ENCODE measurements at regions of chr17 and their contacts with region 1.

Region 1: GRCh38 chr17:74296548-74296936 is 22.5 kb downstream of the DNAI2 start:
- DNase-seq: no peak
- ATAC-seq: peak; percentile 83
- H3K4me3 ChIP-seq: no peak overlapping the region
- H3K27ac ChIP-seq: no peak overlapping the region
- H3K4me1 ChIP-seq: no peaks in the 10 kb centered on the region
- H3K27me3 ChIP-seq: no peaks in the 10 kb centered on the region
- CTCF ChIP-seq: peak; percentile 43 to 72 (median 56); a peak in 4 of 6 replicates
- EP300 ChIP-seq: no peak
- POLR2A ChIP-seq: no peak
- RAD21 ChIP-seq: peak; percentile 47

Region 2: GRCh38 chr17:72407336-72407909 is 1889.1 kb before region 1 on chr17:
- CTCF ChIA-PET with region 1: no interaction called
- POLR2A ChIA-PET with region 1: no interaction called
- RAD21 ChIA-PET with region 1: no interaction called
- SMC1A ChIA-PET with region 1: no interaction called
- in situ Hi-C with region 1: loop called (anchors 25 kb)
- intact Hi-C with region 1: no loop called
- DNase-seq: no peak
- ATAC-seq: peak; percentile 91
- H3K4me3 ChIP-seq: no peak overlapping the region
- H3K27ac ChIP-seq: peak overlapping the region; percentile 13; the same call in 1 of the 2 replicates
- H3K4me1 ChIP-seq: peaks cover 13% of the 10 kb centered on the region
- H3K27me3 ChIP-seq: no peaks in the 10 kb centered on the region
- CTCF ChIP-seq: no peak
- EP300 ChIP-seq: peak; percentile 58 to 76; a peak in 3 of 4 replicates
- POLR2A ChIP-seq: no peak
- RAD21 ChIP-seq: no peak

Region 3: DNA sequence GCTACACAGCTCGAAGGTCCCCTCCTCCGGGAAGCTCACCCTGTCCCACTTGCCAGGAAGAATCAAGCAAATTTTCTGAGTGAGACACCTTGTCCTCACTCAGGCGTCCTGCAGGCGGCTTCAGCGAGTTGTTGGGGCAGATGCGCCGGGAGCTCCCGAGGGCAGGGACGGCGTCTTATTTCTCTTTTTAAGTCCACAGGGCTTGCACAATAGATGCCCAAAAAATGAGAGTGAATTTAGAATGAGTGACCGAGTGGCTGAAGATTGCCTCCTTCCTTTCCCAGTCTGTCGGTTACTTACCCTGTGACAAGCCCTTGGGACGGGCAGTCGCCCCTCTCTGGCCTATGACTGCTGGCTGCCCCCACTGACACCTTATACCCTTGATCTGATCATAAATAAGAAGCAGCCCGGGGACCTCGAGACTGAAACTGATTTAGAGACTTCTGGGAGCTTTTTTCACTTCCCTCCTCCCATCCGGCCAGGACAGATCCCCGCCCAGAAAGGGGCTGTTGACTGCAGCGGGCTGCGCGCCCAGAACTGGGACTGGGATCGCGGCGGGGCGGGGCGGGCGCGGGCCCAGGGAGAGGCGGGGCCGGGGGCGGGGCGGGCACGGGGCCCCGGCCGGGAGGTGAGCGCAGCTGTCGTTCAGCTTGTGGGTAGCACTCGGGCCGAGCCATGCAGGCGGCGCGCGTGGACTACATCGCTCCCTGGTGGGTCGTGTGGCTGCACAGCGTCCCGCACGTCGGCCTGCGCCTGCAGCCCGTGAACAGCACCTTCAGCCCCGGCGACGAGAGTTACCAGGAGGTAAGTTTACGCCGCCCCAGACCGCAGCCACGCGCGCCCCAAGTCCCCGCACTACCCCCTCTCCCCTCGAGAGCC is 83.4 kb before region 1 on chr17 and contains the start of gene TTYH2:
- CTCF ChIA-PET with region 1: interaction called, 25 read pairs
- POLR2A ChIA-PET with region 1: interaction called, 7 read pairs
- RAD21 ChIA-PET with region 1: interaction called, 10 read pairs
- SMC1A ChIA-PET with region 1: interaction called, 9 read pairs
- in situ Hi-C with region 1: no loop called
- intact Hi-C with region 1: loop called (anchors 1 kb)
- DNase-seq: no peak
- ATAC-seq: peak; percentile 76
- H3K4me3 ChIP-seq: peak within 1 kb of the TSS; percentile 77
- H3K27ac ChIP-seq: peak within 1 kb of the TSS; percentile 47
- H3K4me1 ChIP-seq: peaks cover 28% of the 10 kb centered on the region
- H3K27me3 ChIP-seq: no peaks in the 10 kb centered on the region
- CTCF ChIP-seq: peak; percentile 18 to 37 (median 25); a peak in 4 of 6 replicates
- EP300 ChIP-seq: no peak
- POLR2A ChIP-seq: peak; percentile 86
- RAD21 ChIP-seq: peak; percentile 29; the same call in 1 of the 2 replicates
- polyA plus RNA-seq, gene TTYH2: 0.26 to 0.47 TPM

Region 4: GRCh38 chr17:74280093-74280513 is 16.4 kb before region 1 on chr17:
- CTCF ChIA-PET with region 1: interaction called, 160 read pairs
- POLR2A ChIA-PET with region 1: interaction called, 7 read pairs
- RAD21 ChIA-PET with region 1: interaction called, 102 read pairs
- SMC1A ChIA-PET with region 1: interaction called, 101 read pairs
- in situ Hi-C with region 1: no loop called
- intact Hi-C with region 1: no loop called
- DNase-seq: no peak
- ATAC-seq: peak; percentile 76
- H3K4me3 ChIP-seq: 0 out of 2 replicates have a peak overlapping the region, but pooled peaks have one; percentile 24
- H3K27ac ChIP-seq: peak overlapping the region; percentile 79
- H3K4me1 ChIP-seq: peaks cover 27% of the 10 kb centered on the region
- H3K27me3 ChIP-seq: no peaks in the 10 kb centered on the region
- CTCF ChIP-seq: no peak
- EP300 ChIP-seq: no peak
- POLR2A ChIP-seq: no peak
- RAD21 ChIP-seq: no peak

Region 5: DNA sequence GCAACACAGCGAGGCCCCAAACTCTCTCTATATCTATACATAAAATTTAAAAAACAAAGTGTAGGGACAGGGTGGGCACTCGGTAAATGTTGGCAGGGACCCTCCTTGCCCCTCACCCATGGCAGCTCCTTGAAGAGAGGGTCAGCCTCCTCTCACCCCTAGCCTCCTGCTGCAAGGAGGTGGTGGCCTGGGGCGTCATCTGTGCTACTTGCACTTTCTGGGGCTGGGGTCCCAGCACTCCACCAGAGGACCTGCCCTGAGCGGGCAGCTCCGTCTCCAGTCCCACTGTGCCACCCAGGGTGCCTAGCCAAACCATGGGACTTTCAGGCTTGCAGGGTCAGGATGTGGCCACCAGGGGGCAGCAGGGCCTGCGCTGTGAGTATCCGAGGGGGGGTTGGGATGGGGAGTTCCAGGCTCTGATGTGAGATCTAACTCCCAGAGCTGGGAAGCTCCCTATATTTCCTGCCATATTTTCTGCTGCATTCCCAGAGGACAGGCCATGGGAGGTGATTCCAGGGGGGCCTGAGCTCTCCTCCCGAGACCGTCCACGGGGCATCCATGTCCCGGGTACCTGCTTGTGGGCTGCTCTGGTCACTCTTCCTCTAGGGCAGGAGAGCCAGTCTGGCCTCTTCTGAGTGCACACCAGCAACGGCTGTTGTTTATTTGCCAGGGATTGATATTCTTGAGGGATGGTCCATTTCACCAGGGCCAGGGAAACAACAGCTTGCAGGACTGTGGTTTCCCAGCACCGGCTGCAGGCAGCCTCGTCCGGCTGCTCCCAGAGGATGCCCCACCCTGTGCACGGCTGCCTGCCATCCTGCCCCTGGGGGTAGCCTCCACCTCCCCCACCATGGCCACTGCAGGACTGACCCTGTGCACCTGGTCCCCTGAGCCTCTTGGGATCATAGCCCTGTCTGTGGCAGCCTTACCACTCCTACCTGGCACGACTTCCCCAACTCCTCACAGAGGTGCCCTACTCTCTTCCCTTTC is 71.8 kb after region 1 on chr17:
- CTCF ChIA-PET with region 1: interaction called, 28 read pairs
- POLR2A ChIA-PET with region 1: no interaction called
- RAD21 ChIA-PET with region 1: interaction called, 3 read pairs
- SMC1A ChIA-PET with region 1: interaction called, 4 read pairs
- in situ Hi-C with region 1: no loop called
- intact Hi-C with region 1: no loop called
- DNase-seq: no peak
- ATAC-seq: peak; percentile 93
- H3K4me3 ChIP-seq: no peak overlapping the region
- H3K27ac ChIP-seq: no peak overlapping the region
- H3K4me1 ChIP-seq: peaks cover 7% of the 10 kb centered on the region
- H3K27me3 ChIP-seq: no peaks in the 10 kb centered on the region; a peak in 3 of 4 replicates
- CTCF ChIP-seq: peak; percentile 93 to 97 (median 94)
- EP300 ChIP-seq: no peak
- POLR2A ChIP-seq: no peak
- RAD21 ChIP-seq: peak; percentile 73

Region 6: DNA sequence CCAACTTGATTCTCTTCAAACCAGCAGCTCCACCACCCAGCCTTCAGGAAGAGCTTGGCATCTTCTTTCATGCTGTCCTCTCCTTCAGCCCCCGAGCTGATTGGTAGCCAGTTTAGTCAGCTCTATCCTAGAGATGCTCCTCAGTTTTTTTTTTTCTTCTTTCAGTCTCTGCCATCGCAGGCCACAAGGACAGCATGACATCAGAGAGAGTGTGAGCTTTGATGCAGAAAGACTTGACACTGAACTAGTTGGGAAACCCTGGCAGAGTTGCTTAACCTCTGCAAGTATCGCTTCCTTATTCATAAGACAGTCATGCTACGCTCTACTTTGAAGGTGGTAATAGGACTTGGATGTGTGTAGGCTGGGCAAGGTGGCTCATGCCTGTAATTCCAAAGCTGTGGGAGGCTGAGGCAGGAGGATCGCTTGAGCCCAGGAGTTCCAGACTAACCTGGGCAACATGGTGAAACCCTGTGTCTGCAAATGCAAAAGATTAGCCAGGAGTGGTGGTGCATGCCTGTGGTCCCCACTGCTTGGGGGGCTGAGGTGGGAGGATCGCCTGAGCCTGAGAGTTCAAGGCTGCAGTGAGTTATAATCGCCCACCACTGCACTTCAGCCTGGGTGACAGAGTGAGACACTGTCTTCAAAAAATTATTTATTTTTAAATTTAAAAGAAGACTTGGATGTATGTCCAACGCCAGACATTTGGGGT is 232.1 kb after region 1 on chr17:
- CTCF ChIA-PET with region 1: interaction called, 11 read pairs
- POLR2A ChIA-PET with region 1: interaction called, 3 read pairs
- RAD21 ChIA-PET with region 1: interaction called, 3 read pairs
- SMC1A ChIA-PET with region 1: no interaction called
- in situ Hi-C with region 1: no loop called
- intact Hi-C with region 1: loop called (anchors 5 kb)
- DNase-seq: peak; percentile 76
- ATAC-seq: peak; percentile 91
- H3K4me3 ChIP-seq: no peak overlapping the region
- H3K27ac ChIP-seq: no peak overlapping the region
- H3K4me1 ChIP-seq: peaks cover 7% of the 10 kb centered on the region
- H3K27me3 ChIP-seq: peaks cover 0 to 1% of the 10 kb centered on the region in 2 experiments; a peak in 1 of 4 replicates
- CTCF ChIP-seq: no peak
- EP300 ChIP-seq: peak; percentile 37 to 71; a peak in 2 of 4 replicates
- POLR2A ChIP-seq: no peak
- RAD21 ChIP-seq: no peak